Activated T-helper 1 cell treated with anti-CD3 and anti-CD28 coated beads, Interleukin-12 subunit alpha, Interleukin-12 subunit beta, Interleukin-2, Interleukin-4 antibody, amounts not matched to agents 30 ng/mL and 10 ng/mL and 1 ng/mL, durations not matched to agents 14 hours and 24 hours and 36 hours (primary cell): ENCODE measurements at regions of chr18 and their contacts with region 1.

Region 1: GRCh38 chr18:10787293-10787901 is 261.6 kb downstream of the NAPG start:
- DNase-seq: peak; percentile 79
- H3K4me3 Mint-ChIP-seq: no peak overlapping the region
- H3K27ac Mint-ChIP-seq: no peak overlapping the region
- H3K4me1 Mint-ChIP-seq: peaks cover 12% of the 10 kb centered on the region
- H3K27me3 Mint-ChIP-seq: peaks cover 49% of the 10 kb centered on the region

Region 2: GRCh38 chr18:10421859-10422258 is 365.5 kb before region 1 on chr18:
- intact Hi-C with region 1: no loop called
- DNase-seq: no peak
- H3K4me3 Mint-ChIP-seq: no peak overlapping the region
- H3K27ac Mint-ChIP-seq: no peak overlapping the region
- H3K4me1 Mint-ChIP-seq: no peaks in the 10 kb centered on the region
- H3K27me3 Mint-ChIP-seq: peaks cover 3% of the 10 kb centered on the region

Region 3: DNA sequence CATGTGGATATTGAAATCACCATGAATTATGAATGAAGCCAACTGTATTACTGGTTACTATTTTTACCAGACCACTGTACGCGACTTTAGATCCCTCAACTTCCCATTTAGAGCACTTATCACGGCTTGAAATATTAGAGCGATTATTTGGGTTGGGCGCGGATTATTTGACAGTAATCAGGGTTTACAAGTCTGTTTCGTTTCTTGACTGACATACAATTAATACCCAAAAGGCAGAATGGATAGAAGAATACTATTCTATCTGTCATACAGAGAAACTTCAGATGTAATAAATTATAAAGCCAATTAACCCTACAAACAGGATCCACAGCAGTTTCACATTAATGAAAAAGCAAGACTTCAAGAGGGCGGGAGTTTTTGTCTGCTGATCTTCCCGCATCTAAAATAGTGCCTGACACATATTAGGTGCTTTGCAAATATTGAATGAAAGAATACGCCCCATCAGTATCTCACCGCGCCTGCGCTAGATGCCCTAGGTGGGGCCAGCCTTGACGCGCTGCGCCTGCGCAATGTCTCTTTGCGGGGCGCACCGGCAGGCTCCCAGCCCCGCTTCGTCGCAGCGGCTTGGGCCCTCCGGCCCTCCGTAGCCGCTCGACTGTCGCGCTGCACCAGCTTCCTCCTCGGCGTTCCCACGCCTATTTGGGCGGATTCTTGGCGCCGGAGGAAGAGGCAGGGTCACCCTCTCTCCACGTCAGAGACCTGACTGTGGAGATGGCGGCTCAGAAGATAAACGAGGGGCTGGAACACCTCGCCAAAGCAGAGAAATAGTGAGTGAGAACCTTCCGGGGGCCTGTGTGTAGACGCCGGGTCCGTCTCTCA is 261.8 kb before region 1 on chr18 and contains the start of gene NAPG:
- intact Hi-C with region 1: loop called (anchors 10 kb)
- DNase-seq: peak; percentile 91
- H3K4me3 Mint-ChIP-seq: peak within 1 kb of the TSS; percentile 97
- H3K27ac Mint-ChIP-seq: peak within 1 kb of the TSS; percentile 98
- H3K4me1 Mint-ChIP-seq: peaks cover 63% of the 10 kb centered on the region
- H3K27me3 Mint-ChIP-seq: peaks cover 7% of the 10 kb centered on the region
- total RNA-seq, gene NAPG: 37.4 and 40.3 TPM in 2 replicates

Region 4: GRCh38 chr18:10851824-10852319 is 64.5 kb after region 1 on chr18:
- intact Hi-C with region 1: loop called (anchors 5 kb)
- DNase-seq: no peak
- H3K4me3 Mint-ChIP-seq: no peak overlapping the region
- H3K27ac Mint-ChIP-seq: no peak overlapping the region
- H3K4me1 Mint-ChIP-seq: no peaks in the 10 kb centered on the region
- H3K27me3 Mint-ChIP-seq: peaks cover 4% of the 10 kb centered on the region

Region 5: DNA sequence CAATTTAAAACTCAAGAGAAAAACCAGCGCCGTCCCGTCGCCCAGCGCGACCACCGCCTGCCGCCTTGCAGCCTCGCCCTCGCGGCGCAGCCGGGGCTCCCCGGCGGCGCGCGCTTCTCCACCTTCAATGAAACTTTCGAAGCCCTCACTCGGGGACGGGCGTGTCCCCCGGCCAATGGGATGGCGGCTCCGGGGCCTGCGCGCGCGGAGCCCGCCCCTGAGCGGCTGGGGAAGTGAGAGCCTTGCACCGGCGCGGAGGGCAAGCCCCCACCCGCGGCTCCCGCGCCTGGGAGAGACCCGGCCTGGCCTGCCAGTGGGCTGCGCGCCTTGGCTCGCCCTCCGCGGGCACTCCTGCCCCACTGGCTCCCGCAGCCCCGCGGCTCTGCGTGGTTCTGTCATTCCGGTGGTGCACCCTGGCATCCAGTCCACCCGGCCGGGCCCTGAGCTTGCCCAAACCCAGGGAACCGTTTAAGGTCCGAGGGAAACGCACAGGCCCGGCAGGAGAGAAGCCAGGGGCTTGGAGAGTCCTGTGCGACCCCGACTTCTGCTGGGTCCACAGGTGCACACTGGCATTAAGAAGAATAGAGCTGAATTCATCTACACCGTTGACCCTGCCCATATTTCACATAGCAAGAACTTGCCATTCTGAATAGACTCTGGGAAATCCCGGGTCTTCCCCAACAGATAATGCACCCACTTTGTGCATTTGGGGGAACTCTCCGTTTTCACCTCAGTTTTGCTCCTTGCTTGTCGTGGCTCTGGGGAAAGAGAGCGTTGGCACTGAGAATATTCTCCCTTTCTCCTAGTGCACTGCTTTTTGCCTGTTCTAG is 362.3 kb after region 1 on chr18 and contains the start of gene PIEZO2:
- intact Hi-C with region 1: loop called (anchors 10 kb)
- DNase-seq: no peak
- H3K4me3 Mint-ChIP-seq: no peak within 1 kb of the TSS
- H3K27ac Mint-ChIP-seq: no peak within 1 kb of the TSS
- H3K4me1 Mint-ChIP-seq: no peaks in the 10 kb centered on the region
- H3K27me3 Mint-ChIP-seq: peaks cover 31% of the 10 kb centered on the region
- total RNA-seq, gene PIEZO2: not detected in 2 replicates

Region 6: DNA sequence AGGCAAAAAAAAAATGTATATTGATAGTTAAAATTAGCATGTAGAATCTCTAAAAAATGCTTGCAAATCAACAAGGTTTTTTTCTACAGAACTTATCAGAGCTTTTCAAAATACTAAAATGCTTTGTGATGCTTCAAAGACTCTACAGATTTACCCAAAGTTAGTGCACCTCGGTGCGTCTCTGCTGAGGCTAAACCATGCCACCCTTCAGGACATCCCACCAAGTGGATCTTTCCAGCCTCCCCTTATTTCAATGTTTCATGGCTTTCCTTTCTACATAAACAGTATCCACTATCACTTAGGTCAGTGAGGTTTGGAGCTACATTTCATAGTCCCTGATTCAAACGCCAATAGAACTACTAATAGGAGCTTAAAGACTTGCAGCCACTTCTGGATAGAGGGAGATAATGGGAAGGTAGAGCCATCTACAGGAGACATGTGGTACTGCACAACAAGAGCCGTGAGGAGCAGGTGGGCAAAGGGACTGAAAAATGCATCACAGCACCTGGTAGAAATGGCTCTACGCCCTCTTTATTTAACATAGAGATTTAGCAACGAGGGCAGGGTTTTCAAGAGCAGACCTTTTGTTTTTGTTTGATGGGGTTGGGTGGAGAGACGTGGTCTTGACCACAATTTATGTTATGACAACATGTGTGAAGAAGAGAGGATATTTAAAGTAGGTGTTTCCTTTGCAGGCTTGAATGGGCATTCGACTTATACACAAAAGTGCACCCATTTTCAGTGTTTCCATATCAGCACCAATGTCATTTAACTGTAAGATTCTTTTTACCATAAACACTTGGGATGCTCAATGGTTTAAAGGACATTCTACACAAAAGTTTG is 765.9 kb after region 1 on chr18:
- intact Hi-C with region 1: loop called (anchors 10 kb)
- DNase-seq: peak; percentile 6
- H3K4me3 Mint-ChIP-seq: no peak overlapping the region
- H3K27ac Mint-ChIP-seq: no peak overlapping the region
- H3K4me1 Mint-ChIP-seq: no peaks in the 10 kb centered on the region
- H3K27me3 Mint-ChIP-seq: peaks cover 9% of the 10 kb centered on the region

Region 7: DNA sequence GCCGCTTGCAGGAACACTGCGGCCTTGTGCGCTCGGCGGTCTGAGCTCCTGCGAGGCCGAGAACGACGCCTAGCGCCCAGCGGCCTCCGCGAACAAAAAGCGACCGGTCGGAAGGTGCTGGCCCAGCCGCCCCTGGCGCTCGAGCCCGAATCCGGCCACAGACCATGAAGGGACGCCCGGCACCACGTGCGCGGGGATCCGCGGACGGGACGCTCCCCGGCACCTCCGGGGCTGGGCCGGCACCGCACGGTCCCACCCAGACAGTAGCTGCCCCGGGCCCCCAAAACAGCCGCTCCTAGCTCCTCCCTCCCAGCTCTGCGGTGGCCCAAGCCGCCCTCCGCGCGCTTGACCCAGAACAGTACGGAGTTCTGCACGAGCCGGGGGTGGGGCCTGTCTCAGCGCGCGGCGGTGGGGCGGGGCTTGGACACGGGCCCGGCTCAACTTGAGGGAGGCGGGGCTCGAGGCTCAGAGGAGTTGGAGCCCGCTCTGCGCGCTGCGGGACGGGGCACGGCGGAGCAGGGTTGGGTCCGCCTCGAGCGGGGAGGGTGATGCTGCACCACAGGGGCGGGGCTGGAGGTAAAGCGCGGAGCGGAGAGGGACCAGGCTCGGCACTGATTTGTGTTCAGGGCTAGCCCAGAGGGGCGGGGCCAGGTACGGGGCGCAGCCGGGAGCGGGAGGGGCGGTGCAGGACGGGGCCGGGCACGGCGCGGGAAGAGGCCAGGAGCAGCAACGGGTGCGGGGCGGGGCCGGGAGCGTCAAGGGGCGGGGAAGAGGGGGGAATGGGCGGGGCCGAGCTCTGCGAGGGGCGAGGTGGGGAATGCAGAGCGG is 1193.4 kb after region 1 on chr18:
- intact Hi-C with region 1: loop called (anchors 2 kb)
- DNase-seq: peak; percentile 96
- H3K4me3 Mint-ChIP-seq: peak overlapping the region; percentile 80
- H3K27ac Mint-ChIP-seq: peak overlapping the region; percentile 83
- H3K4me1 Mint-ChIP-seq: peaks cover 15% of the 10 kb centered on the region
- H3K27me3 Mint-ChIP-seq: peaks cover 12% of the 10 kb centered on the region